Psoas muscle (tissue), 8 donors: ENCODE measurements at regions of chr15 and their contacts with region 1.

Region 1: DNA sequence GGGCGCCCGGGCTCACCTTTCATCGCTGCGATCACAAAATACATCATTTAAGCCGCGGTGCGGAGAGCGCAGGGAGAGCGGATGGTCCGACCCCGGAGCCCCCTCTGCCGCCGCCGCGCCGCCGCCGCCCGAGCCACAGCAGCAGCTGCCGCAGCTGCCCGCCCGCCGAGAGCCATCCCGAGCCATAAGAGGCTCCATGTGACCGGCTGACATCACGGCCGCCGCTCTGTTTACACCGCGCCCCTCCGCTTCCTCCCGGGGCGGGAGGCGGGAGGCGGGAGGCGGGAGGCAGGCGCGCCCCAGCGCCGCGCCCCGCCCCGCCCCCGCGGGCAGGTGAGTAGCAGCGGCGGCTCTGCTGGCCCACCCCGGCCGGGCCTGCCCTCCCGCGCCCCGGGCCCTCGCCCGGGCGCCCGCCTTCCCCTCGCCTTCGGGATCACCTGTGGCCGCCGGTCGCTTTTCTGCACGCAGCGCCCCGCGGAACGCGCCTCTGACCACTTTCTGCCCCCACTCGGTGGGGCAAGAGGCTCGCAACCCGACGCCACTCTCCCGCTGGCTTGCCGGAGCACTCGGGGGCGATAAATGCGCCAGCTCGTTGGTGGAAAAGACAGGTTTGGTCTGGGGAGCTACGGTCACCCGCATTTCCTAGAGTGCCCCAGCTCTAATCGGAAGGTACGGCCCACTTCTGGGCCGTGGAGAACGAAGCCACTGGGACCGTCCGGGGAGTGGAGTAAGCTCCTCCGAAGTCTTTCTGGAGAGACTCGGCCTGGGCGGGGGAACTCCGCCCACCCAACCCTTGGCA is 113.6 kb upstream of the ICE2 start:
- DNase-seq: peak; percentile 88 to 94
- ATAC-seq: peak; percentile 82 to 86 (median 84)
- H3K4me3 ChIP-seq: peak overlapping the region; percentile 95
- H3K27ac ChIP-seq: peak overlapping the region; percentile 99
- H3K4me1 ChIP-seq: peaks cover 28% of the 10 kb centered on the region
- H3K27me3 ChIP-seq: no peaks in the 10 kb centered on the region
- CTCF ChIP-seq: peak; percentile 25

Region 2: GRCh38 chr15:60649845-60650548 is 57.4 kb after region 1 on chr15:
- intact Hi-C with region 1: loop called in 1 of 2 experiments (anchors 5 kb)
- DNase-seq: no peak
- ATAC-seq: peak in 2 of 4 donors; percentile 16 to 19
- H3K4me3 ChIP-seq: peak overlapping the region; percentile 10
- H3K27ac ChIP-seq: peak overlapping the region; percentile 83
- H3K4me1 ChIP-seq: peaks cover 55% of the 10 kb centered on the region
- H3K27me3 ChIP-seq: no peaks in the 10 kb centered on the region
- CTCF ChIP-seq: no peak